Sigmoid colon (tissue), 7 donors: ENCODE measurements at regions of chr17 and their contacts with region 1.

Region 1: DNA sequence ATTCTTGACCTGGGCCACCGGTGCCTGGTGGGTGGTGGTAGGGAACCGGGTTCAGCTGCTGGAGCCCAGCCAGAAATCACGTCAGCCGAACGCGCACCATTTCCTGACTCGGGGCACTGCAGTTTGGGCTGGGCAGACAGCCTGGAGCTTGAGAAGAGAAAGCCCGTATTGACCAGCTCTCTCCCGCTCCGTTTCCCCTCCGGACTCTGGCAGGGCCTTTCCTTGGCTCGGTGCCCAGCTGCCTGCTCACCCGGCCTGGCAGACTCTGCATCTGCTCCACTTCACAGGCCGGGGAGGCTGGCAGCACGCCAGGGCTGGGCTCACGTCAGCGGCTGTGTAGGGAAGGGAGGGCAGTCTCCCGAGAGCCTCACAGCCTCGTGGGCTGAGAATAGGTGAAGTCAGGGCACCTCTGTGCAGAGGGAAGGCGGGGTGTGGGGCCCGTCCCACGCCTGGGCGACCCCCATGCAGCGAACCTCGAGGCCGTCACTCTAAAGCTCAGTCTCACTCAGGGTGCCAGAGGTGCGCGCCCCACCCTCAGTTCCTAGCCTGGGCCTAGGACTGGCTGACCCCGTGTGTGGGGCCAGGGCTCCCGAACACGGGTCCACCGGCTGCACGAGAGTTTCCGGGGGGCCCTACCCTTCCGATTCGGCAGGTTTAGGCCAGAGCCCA is 59.1 kb downstream of the OR1D5 start:
- DNase-seq: peak; percentile 100
- H3K4me3 ChIP-seq: peak overlapping the region in 3 of 4 donors; percentile 31 to 39 (median 32)
- H3K27ac ChIP-seq: peak overlapping the region; percentile 79 to 91 (median 86)
- H3K4me1 ChIP-seq: peaks cover 0 to 30% (median 25%) of the 10 kb centered on the region in 4 donors
- H3K27me3 ChIP-seq: no peaks in the 10 kb centered on the region
- CTCF ChIP-seq: no peak
- EP300 ChIP-seq: peak; percentile 48 to 97 (median 92)
- POLR2A ChIP-seq: no peak

Region 2: DNA sequence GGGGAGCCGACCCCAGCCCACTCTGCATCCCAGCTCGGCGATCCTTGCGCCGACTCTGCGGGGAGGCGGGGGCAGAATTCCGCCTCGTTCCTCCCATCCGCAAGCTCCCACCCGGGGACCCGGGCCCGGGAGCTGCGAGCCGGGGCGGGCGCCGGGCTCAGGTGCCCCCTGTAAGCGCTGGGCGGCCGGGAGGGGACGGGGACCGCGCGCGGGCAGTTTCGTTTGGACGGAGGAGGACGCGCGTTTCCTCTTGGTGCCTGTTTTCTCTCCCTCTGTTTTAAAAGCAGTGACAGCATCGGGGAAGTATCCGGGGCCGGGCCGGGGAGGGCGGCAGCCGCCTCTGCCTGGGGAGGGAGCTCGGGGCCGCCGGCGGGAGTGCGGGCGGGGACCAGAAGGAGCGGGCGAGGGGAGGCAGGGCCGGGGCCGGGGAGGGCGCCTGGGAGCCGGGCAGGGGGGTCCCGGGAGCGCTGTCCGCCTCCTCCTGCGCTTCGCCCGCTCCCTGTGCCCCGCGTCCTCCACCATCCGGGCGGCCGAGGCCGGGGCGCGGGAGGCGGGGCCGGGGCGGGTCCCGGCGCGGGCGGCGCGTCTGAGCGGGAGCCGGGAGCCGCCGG is 151.1 kb before region 1 on chr17:
- intact Hi-C with region 1: loop called (anchors 1 kb)
- DNase-seq: peak; percentile 80
- H3K4me3 ChIP-seq: peak overlapping the region; percentile 39 to 75 (median 68)
- H3K27ac ChIP-seq: peak overlapping the region; percentile 77 to 89 (median 86)
- H3K4me1 ChIP-seq: peaks cover 0 to 32% (median 26%) of the 10 kb centered on the region in 4 donors
- H3K27me3 ChIP-seq: no peaks in the 10 kb centered on the region
- CTCF ChIP-seq: no peak
- EP300 ChIP-seq: no peak
- POLR2A ChIP-seq: no peak

Region 3: DNA sequence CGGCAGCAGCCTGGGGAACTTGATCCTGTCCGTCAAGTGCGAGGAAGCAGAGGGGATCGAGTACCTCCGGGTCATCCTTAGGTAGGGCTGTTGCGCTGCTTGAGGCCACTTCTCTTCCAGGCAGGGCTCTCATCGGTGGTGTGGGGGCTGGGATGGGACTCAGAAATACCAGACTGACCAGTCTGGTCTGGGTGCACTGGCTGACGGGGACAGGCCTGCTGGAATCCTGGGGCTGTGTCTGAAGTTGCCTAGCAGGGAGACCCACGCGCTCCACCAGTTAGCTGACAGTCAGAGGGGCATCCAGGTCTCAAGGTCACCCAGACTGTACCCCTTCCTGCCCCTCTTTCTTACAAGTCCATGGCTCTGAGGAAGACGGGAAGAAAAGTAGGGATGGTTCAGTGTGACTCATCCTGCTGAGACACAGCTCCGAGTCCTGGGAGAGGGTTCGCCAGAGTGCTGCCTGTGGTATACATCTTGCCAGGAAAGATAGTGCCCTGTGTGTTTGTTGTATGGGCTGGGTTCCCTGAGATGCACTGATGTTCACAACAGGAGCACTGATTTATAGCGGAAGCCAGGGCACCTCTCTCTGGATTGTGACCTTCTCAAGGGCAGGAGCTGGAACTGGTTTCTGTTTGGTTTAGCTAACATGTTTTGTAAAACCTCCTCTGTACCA is 38.6 kb before region 1 on chr17:
- intact Hi-C with region 1: loop called (anchors 1 kb)
- DNase-seq: peak; percentile 80
- H3K4me3 ChIP-seq: no peak overlapping the region
- H3K27ac ChIP-seq: peak overlapping the region in 3 of 4 donors; percentile 81 to 84 (median 83)
- H3K4me1 ChIP-seq: peaks cover 8 to 37% (median 32%) of the 10 kb centered on the region in 4 donors
- H3K27me3 ChIP-seq: no peaks in the 10 kb centered on the region
- CTCF ChIP-seq: no peak
- EP300 ChIP-seq: no peak
- POLR2A ChIP-seq: no peak

Region 4: GRCh38 chr17:2982854-2983253 is 21.4 kb before region 1 on chr17:
- intact Hi-C with region 1: loop called (anchors 1 kb)
- DNase-seq: peak; percentile 95
- H3K4me3 ChIP-seq: no peak overlapping the region
- H3K27ac ChIP-seq: peak overlapping the region; percentile 59 to 80 (median 78)
- H3K4me1 ChIP-seq: peaks cover 0 to 28% (median 15%) of the 10 kb centered on the region in 4 donors
- H3K27me3 ChIP-seq: no peaks in the 10 kb centered on the region
- CTCF ChIP-seq: peak in 2 of 4 experiments; percentile 39 to 41
- EP300 ChIP-seq: peak in 3 of 4 donors; percentile 39 to 83 (median 77)
- POLR2A ChIP-seq: no peak